CD4-positive, alpha-beta T cell (primary cell): ENCODE measurements at regions of chr3 and their contacts with region 1.

Region 1: GRCh38 chr3:121834696-121835464 is at the starts of genes EAF2 and IQCB1:
- DNase-seq: peak; percentile 90 to 98 (median 95)
- ATAC-seq: peak; percentile 95
- H3K4me3 ChIP-seq: peak within 1 kb of the TSS; percentile 70
- H3K4me3 Mint-ChIP-seq: peak within 1 kb of the TSS; percentile 92
- H3K27ac ChIP-seq: peak within 1 kb of the TSS; percentile 83 to 84
- H3K27ac Mint-ChIP-seq: peak within 1 kb of the TSS; percentile 79
- H3K4me1 ChIP-seq: peaks cover 25% of the 10 kb centered on the region
- H3K4me1 Mint-ChIP-seq: peaks cover 61% of the 10 kb centered on the region
- H3K27me3 ChIP-seq: no peaks in the 10 kb centered on the region
- H3K27me3 Mint-ChIP-seq: no peaks in the 10 kb centered on the region
- CTCF ChIP-seq: no peak
- total RNA-seq, gene EAF2: 3.7 to 4.4 TPM
- total RNA-seq, gene IQCB1: 39.6 to 41.3 TPM

Region 2: GRCh38 chr3:120742198-120742849 is 1092.6 kb before region 1 on chr3 and contains the starts of genes GTF2E1 and RABL3:
- CTCF ChIA-PET with region 1: no interaction called
- POLR2A ChIA-PET with region 1: no interaction called
- intact Hi-C with region 1: loop called in 1 of 2 experiments (anchors 10 kb)
- DNase-seq: peak; percentile 90 to 99 (median 94)
- ATAC-seq: peak; percentile 94
- H3K4me3 ChIP-seq: peak within 1 kb of the TSS; percentile 61
- H3K4me3 Mint-ChIP-seq: peak within 1 kb of the TSS; percentile 95
- H3K27ac ChIP-seq: peak within 1 kb of the TSS; percentile 99
- H3K27ac Mint-ChIP-seq: peak within 1 kb of the TSS; percentile 96
- H3K4me1 ChIP-seq: peaks cover 25% of the 10 kb centered on the region
- H3K4me1 Mint-ChIP-seq: peaks cover 50% of the 10 kb centered on the region
- H3K27me3 ChIP-seq: no peaks in the 10 kb centered on the region
- H3K27me3 Mint-ChIP-seq: no peaks in the 10 kb centered on the region
- CTCF ChIP-seq: no peak
- total RNA-seq, gene GTF2E1: 6.3 to 7.5 TPM
- total RNA-seq, gene RABL3: 12.9 to 13.6 TPM

Region 3: GRCh38 chr3:121749276-121750086 is 85.4 kb before region 1 on chr3 and contains the start of gene GOLGB1:
- CTCF ChIA-PET with region 1: no interaction called
- POLR2A ChIA-PET with region 1: interaction called, 9 read pairs
- intact Hi-C with region 1: loop called (anchors 2 to 10 kb)
- DNase-seq: peak; percentile 80 to 99 (median 86)
- ATAC-seq: peak; percentile 95
- H3K4me3 ChIP-seq: peak within 1 kb of the TSS; percentile 77
- H3K4me3 Mint-ChIP-seq: no peak within 1 kb of the TSS
- H3K27ac ChIP-seq: peak within 1 kb of the TSS; percentile 92 to 96
- H3K27ac Mint-ChIP-seq: no peak within 1 kb of the TSS
- H3K4me1 ChIP-seq: peaks cover 17% of the 10 kb centered on the region
- H3K4me1 Mint-ChIP-seq: peaks cover 5% of the 10 kb centered on the region
- H3K27me3 ChIP-seq: no peaks in the 10 kb centered on the region
- H3K27me3 Mint-ChIP-seq: peaks cover 12% of the 10 kb centered on the region
- CTCF ChIP-seq: no peak
- total RNA-seq, gene GOLGB1: 49.8 to 50.2 TPM

Region 4: DNA sequence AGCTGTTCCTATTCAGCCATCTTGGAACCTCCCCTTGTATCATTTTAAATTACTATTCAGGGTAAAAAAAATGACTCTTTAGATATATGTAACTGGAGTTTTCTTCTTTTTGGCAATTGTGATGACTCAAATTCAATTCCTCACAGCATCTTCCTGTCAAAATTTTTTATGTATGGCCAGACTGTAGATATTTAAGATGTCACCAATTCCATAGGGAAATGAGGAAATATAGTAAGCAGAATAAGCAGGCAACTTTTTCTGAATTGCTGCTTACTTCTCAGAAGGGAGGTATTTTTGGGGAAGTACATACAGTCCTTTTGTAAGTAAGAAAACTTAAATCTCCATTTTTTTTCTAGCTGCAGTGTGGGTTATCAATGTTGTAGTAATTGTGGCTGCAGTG is 28.9 kb after region 1 on chr3:
- CTCF ChIA-PET with region 1: no interaction called
- POLR2A ChIA-PET with region 1: no interaction called
- intact Hi-C with region 1: no loop called
- DNase-seq: no peak
- ATAC-seq: no peak
- H3K4me3 ChIP-seq: no peak overlapping the region
- H3K4me3 Mint-ChIP-seq: no peak overlapping the region
- H3K27ac ChIP-seq: no peak overlapping the region
- H3K27ac Mint-ChIP-seq: no peak overlapping the region
- H3K4me1 ChIP-seq: no peaks in the 10 kb centered on the region
- H3K4me1 Mint-ChIP-seq: peaks cover 5% of the 10 kb centered on the region
- H3K27me3 ChIP-seq: no peaks in the 10 kb centered on the region
- H3K27me3 Mint-ChIP-seq: no peaks in the 10 kb centered on the region
- CTCF ChIP-seq: no peak

Region 5: GRCh38 chr3:122415720-122416654 is 581.1 kb after region 1 on chr3 and contains the start of gene WDR5B:
- CTCF ChIA-PET with region 1: no interaction called
- POLR2A ChIA-PET with region 1: no interaction called
- intact Hi-C with region 1: loop called in 1 of 2 experiments (anchors 10 kb)
- DNase-seq: peak; percentile 96 to 99 (median 98)
- ATAC-seq: peak; percentile 87
- H3K4me3 ChIP-seq: peak within 1 kb of the TSS; percentile 76
- H3K4me3 Mint-ChIP-seq: peak within 1 kb of the TSS; percentile 97
- H3K27ac ChIP-seq: peak within 1 kb of the TSS; percentile 90 to 91
- H3K27ac Mint-ChIP-seq: peak within 1 kb of the TSS; percentile 100
- H3K4me1 ChIP-seq: peaks cover 22% of the 10 kb centered on the region
- H3K4me1 Mint-ChIP-seq: peaks cover 59% of the 10 kb centered on the region
- H3K27me3 ChIP-seq: no peaks in the 10 kb centered on the region
- H3K27me3 Mint-ChIP-seq: no peaks in the 10 kb centered on the region
- CTCF ChIP-seq: no peak
- total RNA-seq, gene WDR5B: 2.3 to 2.4 TPM

Region 6: DNA sequence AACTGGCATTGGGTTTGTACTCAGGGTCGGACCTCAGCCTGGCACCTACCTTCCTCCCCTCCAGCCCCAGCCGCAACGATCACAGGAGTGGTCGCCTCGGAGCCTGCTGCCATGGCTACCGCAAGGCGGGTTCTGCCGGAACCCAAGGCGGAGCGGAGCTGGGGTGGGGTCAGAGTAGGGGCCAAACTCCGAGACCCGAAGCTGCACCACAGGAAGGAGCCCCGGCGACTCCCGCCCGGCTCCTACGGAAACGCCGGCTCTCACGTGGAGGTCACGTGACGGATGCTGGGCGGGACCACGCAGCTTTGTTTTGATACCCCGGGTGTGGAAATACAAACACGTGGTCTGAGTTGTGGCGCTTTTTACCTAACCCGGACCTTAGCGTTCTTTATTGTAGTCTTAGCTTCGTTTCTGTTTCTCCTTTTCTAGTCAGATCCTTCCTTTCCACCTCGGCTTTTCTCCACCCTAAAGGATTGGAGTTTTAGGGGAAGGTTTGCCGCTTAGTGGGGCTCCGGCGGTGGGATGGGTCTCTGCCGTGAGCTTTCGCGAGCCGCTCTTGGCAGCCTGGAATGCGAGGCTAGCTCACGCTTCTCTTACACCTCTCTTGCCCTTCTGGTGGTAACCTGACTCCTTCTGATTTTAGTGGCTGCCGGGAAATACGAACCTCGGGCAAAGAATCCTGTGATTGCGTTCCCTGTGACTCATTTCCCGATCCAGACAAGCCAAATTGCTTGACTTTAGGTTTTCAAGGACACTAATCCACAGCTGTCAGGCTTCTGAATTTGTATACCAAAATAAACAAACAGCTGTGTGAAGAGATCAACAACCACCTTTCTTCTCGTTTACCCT is 958.9 kb after region 1 on chr3 and contains the start of gene HSPBAP1:
- CTCF ChIA-PET with region 1: no interaction called
- POLR2A ChIA-PET with region 1: no interaction called
- intact Hi-C with region 1: loop called in 1 of 2 experiments (anchors 2 kb)
- DNase-seq: peak; percentile 76 to 95 (median 86)
- ATAC-seq: peak; percentile 69
- H3K4me3 ChIP-seq: peak within 1 kb of the TSS; percentile 68
- H3K4me3 Mint-ChIP-seq: no peak within 1 kb of the TSS
- H3K27ac ChIP-seq: peak within 1 kb of the TSS; percentile 75 to 84
- H3K27ac Mint-ChIP-seq: no peak within 1 kb of the TSS
- H3K4me1 ChIP-seq: peaks cover 37% of the 10 kb centered on the region
- H3K4me1 Mint-ChIP-seq: peaks cover 37% of the 10 kb centered on the region
- H3K27me3 ChIP-seq: no peaks in the 10 kb centered on the region
- H3K27me3 Mint-ChIP-seq: no peaks in the 10 kb centered on the region
- CTCF ChIP-seq: no peak
- total RNA-seq, gene HSPBAP1: 9.3 to 11.0 TPM